ENCODE measurements at regions of chr14 and their contacts with region 1.

Region 1: DNA sequence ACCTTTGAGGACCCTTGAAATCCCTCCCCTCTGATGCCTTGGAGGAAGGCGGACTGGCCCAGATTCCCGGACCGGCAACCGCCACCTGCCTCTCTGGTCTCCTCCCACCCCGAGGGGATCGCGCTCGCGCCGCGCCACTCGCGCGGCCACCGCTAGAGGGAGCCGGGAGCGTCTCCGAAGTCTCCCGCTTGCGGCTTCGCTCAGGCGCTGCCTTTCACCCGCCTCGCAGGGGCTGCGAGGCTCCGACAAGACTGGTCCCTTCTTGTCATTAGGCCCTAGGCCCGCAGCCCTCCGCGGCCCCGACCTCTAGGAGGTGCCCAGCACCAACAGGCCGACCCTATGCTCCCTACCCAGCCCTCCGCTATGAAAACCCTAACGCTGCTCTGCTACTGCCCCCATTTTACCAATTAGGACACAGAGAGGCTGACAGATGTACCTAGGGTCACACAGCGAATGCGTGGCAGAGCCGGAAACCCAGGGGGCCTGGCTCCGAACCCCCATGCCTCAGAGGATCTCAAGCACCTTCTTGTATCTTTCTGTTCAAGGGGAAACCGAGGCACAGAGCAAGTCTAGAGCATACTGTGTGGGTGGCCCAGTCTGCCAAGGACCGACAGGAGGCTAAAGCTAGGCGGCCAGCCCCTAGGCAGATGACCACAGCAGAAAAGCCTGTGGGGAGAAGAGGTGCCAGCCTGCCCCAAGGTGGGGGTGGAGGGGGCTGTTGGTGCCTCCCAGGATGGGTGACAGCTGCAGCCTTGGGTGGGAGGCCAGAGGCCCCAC is 21.4 kb upstream of the VSX2 start:
- DNase-seq: peak; percentile 28
- ATAC-seq: peak; percentile 93
- H3K4me3 ChIP-seq: peak overlapping the region in 1 of 3 experiments; percentile 59; a peak in 2 of 6 replicates
- H3K27ac ChIP-seq: no peak overlapping the region
- H3K4me1 ChIP-seq: peaks cover 12% of the 10 kb centered on the region; the same call in 1 of the 2 replicates
- H3K27me3 ChIP-seq: peaks cover 14 to 58% of the 10 kb centered on the region in 2 experiments
- CTCF ChIP-seq: peak; percentile 94
- EP300 ChIP-seq: no peak
- POLR2A ChIP-seq: no peak
- RAD21 ChIP-seq: peak; percentile 73

Region 2: DNA sequence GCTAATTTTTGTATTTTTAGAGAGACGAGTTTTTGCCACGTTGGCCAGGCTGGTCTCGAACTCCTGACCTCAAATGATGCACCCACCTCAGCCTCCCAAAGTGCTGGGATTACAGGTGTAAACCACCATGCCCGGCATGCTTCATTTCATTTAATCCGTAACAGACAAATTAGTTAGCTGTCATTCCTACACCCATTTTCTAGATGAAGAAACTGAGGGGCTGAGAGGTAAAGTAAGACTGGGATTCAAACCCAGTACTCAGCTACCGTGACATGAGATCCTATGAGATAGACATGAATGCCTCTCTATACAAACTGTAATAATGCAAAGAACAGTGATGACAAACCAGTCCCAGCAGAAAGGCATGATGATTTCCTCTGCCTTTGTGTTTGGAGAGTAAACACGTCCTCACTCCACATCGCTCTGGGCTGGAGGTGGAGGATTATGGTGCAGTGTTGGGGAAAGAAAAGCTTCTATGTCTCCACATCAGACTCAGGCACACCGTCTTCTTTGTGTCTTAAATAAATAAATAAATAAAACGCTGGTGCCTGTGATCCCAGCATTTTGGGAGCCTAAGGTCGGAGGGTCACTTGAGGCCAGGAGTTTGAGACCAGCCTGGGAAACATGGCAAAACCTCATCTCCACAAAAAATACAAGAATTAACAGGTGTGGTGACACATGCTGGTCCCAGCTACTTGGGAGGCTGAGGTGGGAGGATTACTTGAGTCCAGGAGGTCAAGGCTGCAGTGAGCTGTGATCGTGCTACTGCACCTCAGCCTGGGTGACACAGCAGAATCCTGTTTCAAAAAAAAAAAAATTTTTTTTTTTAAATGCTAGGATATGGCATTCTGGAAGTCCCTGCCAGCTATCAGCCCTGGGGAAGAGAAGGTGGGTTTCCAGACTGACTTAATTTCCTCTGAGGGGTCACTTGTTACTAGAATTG is 31.8 kb after region 1 on chr14:
- CTCF ChIA-PET with region 1: interaction called, 14 read pairs
- POLR2A ChIA-PET with region 1: no interaction called
- in situ Hi-C with region 1: no loop called
- intact Hi-C with region 1: loop called (anchors 1 kb)
- DNase-seq: peak; percentile 81
- ATAC-seq: peak; percentile 82
- H3K4me3 ChIP-seq: 0 out of 6 replicates have a peak overlapping the region, but pooled peaks of 1 of the 3 experiments have one; percentile 23
- H3K27ac ChIP-seq: peak overlapping the region; percentile 45
- H3K4me1 ChIP-seq: peaks cover 41% of the 10 kb centered on the region
- H3K27me3 ChIP-seq: peaks cover 1 to 16% of the 10 kb centered on the region in 2 experiments; a peak in 1 of 5 replicates
- CTCF ChIP-seq: no peak
- EP300 ChIP-seq: peak in 1 of 2 experiments; percentile 3; a peak in 1 of 4 replicates
- POLR2A ChIP-seq: no peak
- RAD21 ChIP-seq: no peak

Region 3: DNA sequence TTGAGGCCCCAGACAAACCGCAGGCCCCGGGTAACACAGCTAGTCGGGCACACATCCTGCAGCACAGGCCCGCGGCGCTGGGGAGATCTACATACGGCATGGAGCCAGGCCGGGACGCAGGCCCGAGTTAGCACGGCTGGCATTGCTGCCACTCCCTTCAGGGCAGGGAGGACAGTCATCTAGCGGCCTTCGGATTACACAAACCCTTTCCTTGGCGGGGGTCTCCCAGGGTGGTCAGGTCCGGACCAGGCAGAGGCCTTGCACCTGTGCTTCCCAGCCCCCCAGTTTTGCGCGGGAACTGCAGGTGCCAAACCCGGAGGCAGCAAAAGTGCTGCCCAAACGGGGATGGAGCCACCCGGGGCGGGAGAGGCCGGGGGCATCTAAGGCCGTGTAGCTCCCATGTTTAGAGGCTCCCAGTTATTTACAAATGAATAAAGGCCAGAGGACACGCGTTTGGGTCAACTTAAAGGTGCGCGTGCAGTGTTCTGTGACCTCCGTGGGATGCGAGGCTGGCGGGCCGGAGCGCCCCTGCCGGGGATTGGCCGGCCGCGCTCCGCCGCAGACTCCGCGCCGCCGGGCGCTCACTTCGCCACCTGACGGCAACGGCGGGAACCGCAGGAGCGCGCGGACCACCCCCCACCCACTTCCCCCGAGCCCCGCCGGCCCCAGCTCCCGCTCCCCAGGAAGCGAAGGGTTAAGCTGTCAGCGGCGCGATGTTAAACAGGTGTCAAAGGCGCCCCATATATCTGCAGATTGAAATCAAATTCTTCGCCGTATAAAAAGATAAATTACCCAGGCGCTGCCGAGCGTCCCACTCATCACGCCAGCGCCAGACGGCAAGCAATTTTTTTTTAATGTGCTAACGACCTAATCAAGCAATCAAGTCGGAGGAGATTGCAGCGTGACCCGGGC is 39.5 kb after region 1 on chr14:
- CTCF ChIA-PET with region 1: interaction called, 13 read pairs
- POLR2A ChIA-PET with region 1: no interaction called
- in situ Hi-C with region 1: loop called (anchors 5 kb)
- intact Hi-C with region 1: no loop called
- DNase-seq: no peak
- ATAC-seq: peak; percentile 77
- H3K4me3 ChIP-seq: peak overlapping the region; percentile 57 to 73 (median 69)
- H3K27ac ChIP-seq: no peak overlapping the region
- H3K4me1 ChIP-seq: peaks cover 10% of the 10 kb centered on the region
- H3K27me3 ChIP-seq: peaks cover 10 to 47% of the 10 kb centered on the region in 2 experiments; a peak in 4 of 5 replicates
- CTCF ChIP-seq: peak; percentile 74
- EP300 ChIP-seq: no peak
- POLR2A ChIP-seq: no peak
- RAD21 ChIP-seq: peak; percentile 65